CD8-positive, alpha-beta T cell (primary cell): ENCODE measurements at regions of chrX and their contacts with region 1.

Region 1: GRCh38 chrX:41734530-41734929 is 10.5 kb downstream of the GPR82 start:
- DNase-seq: peak in 3 of 9 experiments; percentile 17 to 49 (median 24)
- ATAC-seq: peak; percentile 33
- H3K4me3 ChIP-seq: no peak overlapping the region
- H3K4me3 Mint-ChIP-seq: no peak overlapping the region
- H3K27ac ChIP-seq: no peak overlapping the region
- H3K27ac Mint-ChIP-seq: peak overlapping the region; percentile 55
- H3K4me1 ChIP-seq: peaks cover 7% of the 10 kb centered on the region
- H3K4me1 Mint-ChIP-seq: peaks cover 37% of the 10 kb centered on the region
- H3K27me3 ChIP-seq: no peaks in the 10 kb centered on the region
- H3K27me3 Mint-ChIP-seq: no peaks in the 10 kb centered on the region
- CTCF ChIP-seq: peak; percentile 19

Region 2: DNA sequence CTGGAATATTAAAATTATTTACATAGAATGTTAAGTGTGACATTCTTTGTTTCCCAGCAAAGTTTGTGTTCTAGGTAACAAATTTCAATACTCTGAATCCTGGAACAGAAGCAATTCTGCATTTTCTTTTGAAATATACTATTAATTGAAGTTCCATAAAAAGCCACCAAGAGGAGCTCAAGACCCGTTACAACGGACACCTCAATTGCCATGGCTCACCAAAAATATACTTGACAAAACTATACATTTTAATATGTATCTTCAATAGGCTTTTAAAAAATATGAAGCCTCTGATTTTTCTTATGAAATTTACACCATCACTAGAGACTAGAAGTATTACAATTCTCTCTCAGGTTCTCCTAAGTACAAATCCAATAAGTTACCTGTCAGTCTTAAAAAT is 176.0 kb before region 1 on chrX:
- CTCF ChIA-PET with region 1: no interaction called
- POLR2A ChIA-PET with region 1: no interaction called
- intact Hi-C with region 1: loop called in 1 of 2 experiments (anchors 10 kb)
- DNase-seq: peak in 2 of 9 experiments; percentile 35 to 50
- ATAC-seq: no peak
- H3K4me3 ChIP-seq: no peak overlapping the region
- H3K4me3 Mint-ChIP-seq: no peak overlapping the region
- H3K27ac ChIP-seq: no peak overlapping the region
- H3K27ac Mint-ChIP-seq: no peak overlapping the region
- H3K4me1 ChIP-seq: peaks cover 28% of the 10 kb centered on the region
- H3K4me1 Mint-ChIP-seq: peaks cover 48% of the 10 kb centered on the region
- H3K27me3 ChIP-seq: no peaks in the 10 kb centered on the region
- H3K27me3 Mint-ChIP-seq: no peaks in the 10 kb centered on the region
- CTCF ChIP-seq: no peak

Region 3: DNA sequence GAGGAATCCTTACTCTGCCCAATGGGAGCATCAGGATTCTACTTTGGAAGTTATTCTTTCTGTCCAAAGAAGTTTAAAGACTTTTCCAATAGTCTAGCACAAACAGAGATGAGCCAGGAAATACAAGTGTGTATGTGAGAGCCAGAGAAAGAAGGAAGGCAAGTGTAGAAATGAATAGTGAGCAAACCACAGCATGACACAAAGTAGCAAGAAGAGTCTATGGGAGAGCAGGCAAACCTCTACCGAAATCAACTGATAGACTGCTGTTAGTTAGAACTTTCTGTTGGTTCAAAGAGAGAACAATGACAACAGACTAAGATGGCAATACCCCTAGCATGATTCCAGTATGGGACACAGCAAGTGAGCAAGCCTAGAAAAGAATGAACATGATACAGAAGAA is 61.9 kb before region 1 on chrX:
- CTCF ChIA-PET with region 1: no interaction called
- POLR2A ChIA-PET with region 1: no interaction called
- intact Hi-C with region 1: no loop called
- DNase-seq: no peak
- ATAC-seq: no peak
- H3K4me3 ChIP-seq: no peak overlapping the region
- H3K4me3 Mint-ChIP-seq: no peak overlapping the region
- H3K27ac ChIP-seq: no peak overlapping the region
- H3K27ac Mint-ChIP-seq: no peak overlapping the region
- H3K4me1 ChIP-seq: no peaks in the 10 kb centered on the region
- H3K4me1 Mint-ChIP-seq: peaks cover 10% of the 10 kb centered on the region
- H3K27me3 ChIP-seq: no peaks in the 10 kb centered on the region
- H3K27me3 Mint-ChIP-seq: no peaks in the 10 kb centered on the region
- CTCF ChIP-seq: no peak

Region 4: GRCh38 chrX:41688835-41689234 is 45.7 kb before region 1 on chrX and contains the start of gene GPR34:
- CTCF ChIA-PET with region 1: interaction called, 3 read pairs
- POLR2A ChIA-PET with region 1: no interaction called
- intact Hi-C with region 1: loop called in 1 of 2 experiments (anchors 10 kb)
- DNase-seq: peak in 3 of 9 experiments; percentile 33 to 55 (median 34)
- ATAC-seq: peak; percentile 62
- H3K4me3 ChIP-seq: no peak within 1 kb of the TSS
- H3K4me3 Mint-ChIP-seq: no peak within 1 kb of the TSS
- H3K27ac ChIP-seq: no peak within 1 kb of the TSS
- H3K27ac Mint-ChIP-seq: peak within 1 kb of the TSS; percentile 52
- H3K4me1 ChIP-seq: peaks cover 16% of the 10 kb centered on the region
- H3K4me1 Mint-ChIP-seq: peaks cover 47% of the 10 kb centered on the region
- H3K27me3 ChIP-seq: no peaks in the 10 kb centered on the region
- H3K27me3 Mint-ChIP-seq: no peaks in the 10 kb centered on the region
- CTCF ChIP-seq: no peak
- total RNA-seq, gene GPR34: 0.25 TPM in 1 of 2 experiments, not detected in the other